Activated CD8-positive, alpha-beta T cell treated with anti-CD3 and anti-CD28 coated beads for 36 hours (primary cell): ENCODE measurements at regions of chr1 and their contacts with region 1.

Region 1: GRCh38 chr1:226626577-226626956 is 78.0 kb downstream of the STUM start:
- DNase-seq: peak; percentile 89
- ATAC-seq: peak; percentile 90
- H3K4me3 Mint-ChIP-seq: peak overlapping the region; percentile 43
- H3K27ac Mint-ChIP-seq: peak overlapping the region; percentile 87
- H3K4me1 Mint-ChIP-seq: peaks cover 28% of the 10 kb centered on the region
- H3K27me3 Mint-ChIP-seq: no peaks in the 10 kb centered on the region
- CTCF ChIP-seq: peak; percentile 99

Region 2: GRCh38 chr1:226687426-226687825 is 60.9 kb after region 1 on chr1:
- CTCF ChIA-PET with region 1: interaction called, 133 read pairs
- POLR2A ChIA-PET with region 1: no interaction called
- intact Hi-C with region 1: no loop called
- DNase-seq: peak; percentile 79
- ATAC-seq: peak; percentile 31
- H3K4me3 Mint-ChIP-seq: peak overlapping the region; percentile 15
- H3K27ac Mint-ChIP-seq: peak overlapping the region; percentile 99
- H3K4me1 Mint-ChIP-seq: peaks cover 100% of the 10 kb centered on the region
- H3K27me3 Mint-ChIP-seq: no peaks in the 10 kb centered on the region
- CTCF ChIP-seq: peak; percentile 61

Region 3: GRCh38 chr1:226736908-226737818 is 110.6 kb after region 1 on chr1:
- CTCF ChIA-PET with region 1: interaction called, 11 read pairs
- POLR2A ChIA-PET with region 1: interaction called, 4 read pairs
- intact Hi-C with region 1: no loop called
- DNase-seq: peak; percentile 73
- ATAC-seq: peak; percentile 46
- H3K4me3 Mint-ChIP-seq: peak overlapping the region; percentile 92
- H3K27ac Mint-ChIP-seq: peak overlapping the region; percentile 88
- H3K4me1 Mint-ChIP-seq: peaks cover 39% of the 10 kb centered on the region
- H3K27me3 Mint-ChIP-seq: no peaks in the 10 kb centered on the region
- CTCF ChIP-seq: peak; percentile 23

Region 4: GRCh38 chr1:226827968-226828513 is 201.5 kb after region 1 on chr1:
- CTCF ChIA-PET with region 1: interaction called, 73 read pairs
- POLR2A ChIA-PET with region 1: interaction called, 5 read pairs
- intact Hi-C with region 1: loop called (anchors 5 kb)
- DNase-seq: peak; percentile 97
- ATAC-seq: peak; percentile 99
- H3K4me3 Mint-ChIP-seq: peak overlapping the region; percentile 53
- H3K27ac Mint-ChIP-seq: peak overlapping the region; percentile 93
- H3K4me1 Mint-ChIP-seq: peaks cover 36% of the 10 kb centered on the region
- H3K27me3 Mint-ChIP-seq: no peaks in the 10 kb centered on the region
- CTCF ChIP-seq: peak; percentile 89